ENCODE measurements at regions of chr3 and their contacts with region 1.

Region 1: GRCh38 chr3:186540221-186540834 is 3.9 kb downstream of the CRYGS start:
- DNase-seq: peak; percentile 85
- H3K4me3 Mint-ChIP-seq: no peak overlapping the region
- H3K27ac Mint-ChIP-seq: peak overlapping the region; percentile 2
- H3K4me1 Mint-ChIP-seq: peaks cover 21% of the 10 kb centered on the region
- H3K27me3 Mint-ChIP-seq: no peaks in the 10 kb centered on the region

Region 2: GRCh38 chr3:185983495-185984141 is 556.7 kb before region 1 on chr3:
- CTCF ChIA-PET with region 1: interaction called, 48 read pairs
- POLR2A ChIA-PET with region 1: no interaction called
- DNase-seq: peak; percentile 58
- H3K4me3 Mint-ChIP-seq: no peak overlapping the region
- H3K27ac Mint-ChIP-seq: no peak overlapping the region
- H3K4me1 Mint-ChIP-seq: peaks cover 4% of the 10 kb centered on the region
- H3K27me3 Mint-ChIP-seq: peaks cover 9% of the 10 kb centered on the region

Region 3: DNA sequence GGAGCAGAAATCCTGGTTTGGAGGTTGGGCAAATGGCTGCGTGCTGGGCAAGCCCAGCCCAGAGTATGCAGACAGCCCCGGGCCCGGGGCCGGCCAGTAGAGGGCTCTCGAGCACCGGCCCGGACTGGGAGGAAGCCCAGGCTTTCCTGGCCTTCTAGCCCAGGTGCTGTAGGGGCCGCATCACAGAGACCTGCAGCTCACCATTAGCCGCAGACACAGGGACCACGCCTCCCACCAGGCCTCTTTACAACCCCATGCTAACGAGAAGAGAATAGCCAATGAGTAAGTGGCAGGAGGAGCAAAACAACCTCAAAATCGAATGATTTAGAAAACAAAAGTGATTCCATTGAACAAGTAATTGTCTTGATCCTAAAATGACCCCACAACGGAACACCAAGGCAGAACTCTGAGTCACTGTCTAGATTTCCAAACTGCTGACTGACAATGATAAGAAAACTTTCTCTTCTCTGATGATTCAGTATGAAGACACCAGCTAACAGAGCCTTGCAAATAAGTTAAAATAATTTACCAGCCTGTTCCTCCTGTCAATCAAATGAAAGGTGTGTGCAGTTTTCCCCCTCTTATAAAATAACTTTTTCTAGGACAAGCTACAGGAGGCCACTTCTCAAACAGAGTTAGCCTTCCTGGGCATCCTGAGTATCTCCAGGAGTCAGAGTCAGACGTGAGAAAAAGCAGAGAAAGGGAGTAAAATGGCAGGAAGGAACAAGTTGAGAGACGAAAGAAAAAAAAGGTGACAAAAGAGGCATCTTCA is 280.5 kb before region 1 on chr3:
- CTCF ChIA-PET with region 1: interaction called, 110 read pairs
- POLR2A ChIA-PET with region 1: interaction called, 6 read pairs
- DNase-seq: peak; percentile 71
- H3K4me3 Mint-ChIP-seq: no peak overlapping the region
- H3K27ac Mint-ChIP-seq: no peak overlapping the region
- H3K4me1 Mint-ChIP-seq: peaks cover 7% of the 10 kb centered on the region
- H3K27me3 Mint-ChIP-seq: peaks cover 13% of the 10 kb centered on the region

Region 4: GRCh38 chr3:186526256-186526606 is 14.1 kb before region 1 on chr3:
- CTCF ChIA-PET with region 1: interaction called, 11 read pairs
- POLR2A ChIA-PET with region 1: no interaction called
- DNase-seq: no peak
- H3K4me3 Mint-ChIP-seq: no peak overlapping the region
- H3K27ac Mint-ChIP-seq: no peak overlapping the region
- H3K4me1 Mint-ChIP-seq: peaks cover 10% of the 10 kb centered on the region
- H3K27me3 Mint-ChIP-seq: no peaks in the 10 kb centered on the region

Region 5: GRCh38 chr3:186609247-186609868 is 69.0 kb after region 1 on chr3:
- CTCF ChIA-PET with region 1: interaction called, 44 read pairs
- POLR2A ChIA-PET with region 1: no interaction called
- DNase-seq: no peak
- H3K4me3 Mint-ChIP-seq: no peak overlapping the region
- H3K27ac Mint-ChIP-seq: no peak overlapping the region
- H3K4me1 Mint-ChIP-seq: peaks cover 3% of the 10 kb centered on the region
- H3K27me3 Mint-ChIP-seq: peaks cover 16% of the 10 kb centered on the region

Measured in activated CD4-positive, alpha-beta memory T cell treated with anti-CD3 and anti-CD28 coated beads, Interleukin-2, amount 10 ng/mL, durations not matched to agents 7 days and 5 days (primary cell).